Activated naive CD4-positive, alpha-beta T cell treated with anti-CD3 and anti-CD28 coated beads for 36 hours (primary cell): ENCODE measurements at regions of chr21 and their contacts with region 1.

Region 1: DNA sequence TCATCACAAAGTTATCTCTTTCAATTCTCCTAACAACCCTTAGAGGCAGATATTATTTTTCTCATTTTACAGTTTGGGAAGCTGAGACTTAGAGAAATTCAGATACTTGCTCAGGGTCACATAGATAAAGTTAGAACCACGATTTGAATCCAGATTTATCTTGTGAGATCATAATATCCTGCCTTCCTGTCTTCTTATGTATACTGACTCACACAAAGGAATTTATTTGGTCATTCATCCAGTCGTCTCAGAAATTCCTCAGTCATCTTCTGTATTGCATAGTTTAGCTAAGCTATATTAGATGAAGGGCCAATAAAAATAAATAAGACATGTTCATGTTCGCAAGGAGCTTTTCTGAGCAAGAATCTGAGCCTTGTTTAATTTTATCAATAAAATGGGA is 35.8 kb upstream of the RUNX1 start:
- DNase-seq: no peak
- H3K4me3 Mint-ChIP-seq: no peak overlapping the region
- H3K27ac Mint-ChIP-seq: no peak overlapping the region
- H3K4me1 Mint-ChIP-seq: peaks cover 32% of the 10 kb centered on the region
- H3K27me3 Mint-ChIP-seq: peaks cover 3% of the 10 kb centered on the region

Region 2: DNA sequence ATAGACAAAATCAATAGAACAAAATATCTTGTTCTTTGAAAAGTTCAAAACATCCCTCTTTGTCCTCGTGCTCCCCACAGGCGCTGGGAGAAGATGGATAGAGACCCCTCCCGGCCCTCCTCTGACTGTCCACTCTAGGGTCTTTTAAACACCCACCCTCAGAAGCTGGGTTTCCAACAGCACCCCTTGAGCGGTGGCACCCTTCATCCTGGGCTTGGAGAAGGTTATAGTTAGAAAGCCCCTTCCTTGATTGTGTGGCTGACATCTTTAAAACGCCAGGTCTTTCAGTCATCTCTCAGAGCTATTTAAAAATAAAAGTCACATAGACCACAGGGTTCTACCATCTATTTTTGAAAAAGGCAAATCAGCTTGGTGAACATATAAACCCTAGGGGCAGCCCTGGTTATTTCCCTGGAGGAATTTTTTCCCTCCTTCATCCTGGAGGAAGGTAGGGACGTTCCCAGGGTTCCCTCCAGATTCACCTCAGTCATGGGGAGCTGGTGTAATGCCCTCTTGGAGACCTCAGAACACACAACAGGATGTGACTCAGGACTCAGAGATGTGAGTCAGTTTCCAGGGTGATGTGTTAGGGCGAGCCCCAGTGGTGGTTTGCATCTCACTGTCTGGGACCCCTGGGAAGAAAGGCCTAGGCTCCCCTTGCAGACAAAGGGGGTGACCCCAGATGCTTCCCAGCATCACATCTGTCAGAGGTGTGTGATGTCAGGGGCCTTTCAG is 277.6 kb before region 1 on chr21:
- CTCF ChIA-PET with region 1: no interaction called
- intact Hi-C with region 1: loop called (anchors 1 kb)
- DNase-seq: peak; percentile 92
- H3K4me3 Mint-ChIP-seq: no peak overlapping the region
- H3K27ac Mint-ChIP-seq: peak overlapping the region; percentile 91
- H3K4me1 Mint-ChIP-seq: peaks cover 91% of the 10 kb centered on the region
- H3K27me3 Mint-ChIP-seq: no peaks in the 10 kb centered on the region

Region 3: DNA sequence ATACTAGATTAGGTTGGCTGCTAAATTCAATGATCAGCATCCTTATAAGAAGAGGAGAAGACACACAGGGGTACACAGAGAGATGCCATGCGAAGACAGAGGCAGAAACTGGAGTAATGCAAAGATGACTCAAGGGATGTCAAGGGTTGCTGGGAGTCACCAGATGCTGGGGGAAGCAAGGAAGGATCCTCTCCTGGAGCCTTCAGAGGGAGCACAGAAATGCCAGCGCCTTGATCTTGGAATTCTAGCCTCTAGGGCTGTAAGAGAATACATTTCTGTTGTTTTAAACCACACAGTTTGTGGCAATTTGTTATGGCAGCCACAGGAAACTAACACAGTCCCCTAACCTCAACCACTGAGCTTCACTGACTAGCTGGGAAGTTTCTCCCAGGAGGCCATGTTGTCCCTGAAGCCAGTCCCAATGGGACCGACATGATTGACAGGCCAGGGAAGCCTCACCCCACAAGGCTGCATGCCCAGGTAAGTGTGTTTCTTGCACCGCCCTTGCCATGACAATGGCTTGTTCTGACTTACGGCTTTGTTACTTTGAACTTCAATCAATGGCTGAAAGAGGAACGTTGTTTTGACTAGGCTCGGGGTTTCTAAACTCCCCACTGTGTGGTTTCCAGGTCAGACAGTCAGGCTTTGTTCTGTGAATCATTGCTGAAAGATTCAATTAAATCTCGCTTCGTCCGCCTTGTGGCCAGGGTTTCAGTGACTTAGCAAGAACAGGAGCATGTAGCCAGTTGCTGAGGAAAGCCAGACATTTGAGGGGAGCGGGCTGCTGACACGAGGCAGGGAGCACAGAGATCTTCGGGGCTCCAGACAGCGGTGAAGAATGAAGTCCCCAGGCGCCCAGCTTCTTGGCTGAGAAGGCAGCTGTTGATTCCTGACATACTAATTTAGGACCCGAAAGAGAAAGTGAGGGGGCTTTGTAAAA is 98.0 kb before region 1 on chr21:
- CTCF ChIA-PET with region 1: interaction called, 3 read pairs
- intact Hi-C with region 1: loop called (anchors 1 kb)
- DNase-seq: peak; percentile 92
- H3K4me3 Mint-ChIP-seq: peak overlapping the region; percentile 71
- H3K27ac Mint-ChIP-seq: peak overlapping the region; percentile 89
- H3K4me1 Mint-ChIP-seq: peaks cover 94% of the 10 kb centered on the region
- H3K27me3 Mint-ChIP-seq: no peaks in the 10 kb centered on the region

Region 4: GRCh38 chr21:35059742-35060141 is 25.1 kb before region 1 on chr21:
- CTCF ChIA-PET with region 1: no interaction called
- intact Hi-C with region 1: no loop called
- DNase-seq: no peak
- H3K4me3 Mint-ChIP-seq: no peak overlapping the region
- H3K27ac Mint-ChIP-seq: no peak overlapping the region
- H3K4me1 Mint-ChIP-seq: peaks cover 28% of the 10 kb centered on the region
- H3K27me3 Mint-ChIP-seq: no peaks in the 10 kb centered on the region

Region 5: DNA sequence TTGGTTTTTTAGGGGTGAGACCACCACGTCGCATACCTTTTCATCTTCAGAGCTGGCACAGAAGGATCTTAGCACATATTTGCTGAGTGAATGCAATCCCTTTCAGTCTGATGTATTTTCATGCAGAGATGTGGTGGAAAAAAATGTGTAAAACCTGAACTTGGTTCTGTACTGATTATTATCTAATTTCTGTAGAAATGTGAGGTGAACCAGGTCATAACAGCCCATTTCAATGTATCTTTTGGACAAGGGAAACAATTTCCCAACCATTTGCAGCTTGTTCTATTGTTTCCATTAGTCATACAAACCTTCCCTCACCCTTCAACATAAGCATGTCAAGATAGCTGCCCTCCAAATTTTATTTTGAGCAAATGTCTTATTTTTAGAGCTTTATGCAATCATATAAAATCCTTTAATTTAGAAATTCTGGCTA is 11.0 kb after region 1 on chr21:
- CTCF ChIA-PET with region 1: interaction called, 4 read pairs
- intact Hi-C with region 1: loop called (anchors 1 kb)
- DNase-seq: no peak
- H3K4me3 Mint-ChIP-seq: no peak overlapping the region
- H3K27ac Mint-ChIP-seq: no peak overlapping the region
- H3K4me1 Mint-ChIP-seq: peaks cover 32% of the 10 kb centered on the region
- H3K27me3 Mint-ChIP-seq: no peaks in the 10 kb centered on the region

Region 6: GRCh38 chr21:35179990-35180540 is 95.2 kb after region 1 on chr21:
- CTCF ChIA-PET with region 1: no interaction called
- intact Hi-C with region 1: loop called (anchors 1 kb)
- DNase-seq: peak; percentile 47
- H3K4me3 Mint-ChIP-seq: no peak overlapping the region
- H3K27ac Mint-ChIP-seq: no peak overlapping the region
- H3K4me1 Mint-ChIP-seq: peaks cover 20% of the 10 kb centered on the region
- H3K27me3 Mint-ChIP-seq: no peaks in the 10 kb centered on the region

Region 7: DNA sequence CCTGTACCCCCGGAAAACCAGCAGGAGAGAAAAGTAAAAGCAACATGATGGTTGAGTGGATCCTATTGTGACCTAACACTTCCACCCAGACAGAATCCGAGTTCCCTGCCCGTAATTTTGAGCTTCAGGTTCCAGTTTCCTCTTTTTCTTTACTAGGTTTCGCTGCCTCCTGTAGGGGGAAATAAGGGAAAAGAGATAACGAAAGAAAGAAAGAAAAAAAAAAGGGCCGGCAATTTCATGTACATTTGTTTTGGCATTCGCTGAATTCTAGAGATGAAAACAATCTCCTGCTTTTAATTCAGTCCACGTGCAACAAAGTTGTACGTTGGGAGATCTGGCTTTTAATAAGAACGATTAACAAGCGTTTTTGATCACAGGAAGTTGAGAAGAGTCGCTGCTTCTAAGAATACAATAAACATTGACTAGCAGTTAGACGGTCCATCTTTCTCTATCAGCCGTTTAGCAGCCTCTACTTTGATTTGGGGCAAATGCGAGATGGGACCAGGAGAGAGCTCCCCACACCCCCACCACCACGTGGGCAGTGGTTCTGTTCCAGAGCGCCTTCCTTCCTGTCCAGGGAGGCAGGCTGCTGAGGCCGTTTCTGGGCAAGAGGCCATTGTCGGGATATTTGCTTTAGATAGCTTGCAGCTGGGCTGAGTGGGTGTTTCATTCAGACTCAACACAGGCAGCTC is 120.1 kb after region 1 on chr21:
- CTCF ChIA-PET with region 1: no interaction called
- intact Hi-C with region 1: no loop called
- DNase-seq: peak; percentile 34
- H3K4me3 Mint-ChIP-seq: peak overlapping the region; percentile 70
- H3K27ac Mint-ChIP-seq: peak overlapping the region; percentile 82
- H3K4me1 Mint-ChIP-seq: peaks cover 47% of the 10 kb centered on the region
- H3K27me3 Mint-ChIP-seq: no peaks in the 10 kb centered on the region

Region 8: GRCh38 chr21:35252831-35253230 is 168.0 kb after region 1 on chr21:
- CTCF ChIA-PET with region 1: no interaction called
- intact Hi-C with region 1: loop called (anchors 1 kb)
- DNase-seq: peak; percentile 63
- H3K4me3 Mint-ChIP-seq: no peak overlapping the region
- H3K27ac Mint-ChIP-seq: no peak overlapping the region
- H3K4me1 Mint-ChIP-seq: peaks cover 29% of the 10 kb centered on the region
- H3K27me3 Mint-ChIP-seq: no peaks in the 10 kb centered on the region

Region 9: GRCh38 chr21:35428489-35428888 is 343.6 kb after region 1 on chr21:
- CTCF ChIA-PET with region 1: no interaction called
- intact Hi-C with region 1: no loop called
- DNase-seq: peak; percentile 65
- H3K4me3 Mint-ChIP-seq: peak overlapping the region; percentile 42
- H3K27ac Mint-ChIP-seq: peak overlapping the region; percentile 71
- H3K4me1 Mint-ChIP-seq: peaks cover 34% of the 10 kb centered on the region
- H3K27me3 Mint-ChIP-seq: no peaks in the 10 kb centered on the region